ENCODE measurements at regions of chr17 and their contacts with region 1.

Region 1: DNA sequence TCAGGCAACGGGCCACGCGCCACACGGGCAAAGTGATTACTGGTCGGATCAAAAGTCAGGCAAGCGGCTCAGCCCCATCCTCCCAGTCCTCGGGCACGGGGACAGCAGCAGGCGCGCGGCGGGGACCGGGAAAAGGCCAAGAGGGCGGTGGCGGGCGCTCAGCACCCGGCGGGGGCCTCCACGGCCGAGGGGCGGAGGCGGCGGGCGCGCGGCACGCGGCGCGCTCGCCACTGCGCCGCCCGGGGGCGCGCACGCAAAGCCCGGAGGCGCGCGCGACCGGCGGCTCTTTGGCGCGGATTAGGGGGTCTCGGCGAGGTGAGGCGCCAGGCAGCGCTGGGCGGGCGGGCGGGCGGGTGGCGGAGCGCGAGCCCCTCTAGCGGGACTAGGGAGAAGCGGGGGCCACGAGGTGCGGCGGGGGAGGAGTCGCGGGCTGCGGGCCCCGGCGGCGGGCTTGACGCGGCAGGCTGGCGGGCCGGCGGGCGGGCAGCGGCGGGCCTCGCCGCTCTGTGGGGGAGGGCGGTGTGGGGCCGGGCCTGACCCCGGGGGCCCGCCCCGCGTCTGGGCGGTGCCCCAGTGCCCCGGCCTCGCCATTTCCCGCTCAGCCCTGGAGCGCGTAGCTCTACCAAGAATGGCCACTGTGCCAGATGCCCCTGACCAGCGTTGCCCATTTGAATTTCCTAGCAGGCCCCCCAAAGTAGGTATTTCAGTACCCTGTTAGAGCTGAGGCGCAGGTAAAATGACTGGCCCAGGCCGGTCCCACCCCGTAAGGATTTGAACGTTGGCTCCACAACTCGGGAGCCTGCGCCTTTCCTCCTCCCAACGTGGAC is at the starts of genes ACACA and TADA2A:
- DNase-seq: peak; percentile 81 to 90 (median 86)
- ATAC-seq: peak; percentile 93 to 98 (median 97)
- H3K4me3 ChIP-seq: peak within 1 kb of the TSS; percentile 60 to 96 (median 84)
- H3K27ac ChIP-seq: peak within 1 kb of the TSS; percentile 74 to 98 (median 94)
- H3K4me1 ChIP-seq: peaks cover 0 to 29% (median 12%) of the 10 kb centered on the region in 12 donors
- H3K27me3 ChIP-seq: no peaks in the 10 kb centered on the region
- CTCF ChIP-seq: no peak
- POLR2A ChIP-seq: peak in 1 of 2 donors; percentile 61
- total RNA-seq, gene ACACA: 14.0 to 33.0 (median 16.1) TPM
- total RNA-seq, gene TADA2A: 9.6 to 19.4 (median 13.2) TPM

Region 2: DNA sequence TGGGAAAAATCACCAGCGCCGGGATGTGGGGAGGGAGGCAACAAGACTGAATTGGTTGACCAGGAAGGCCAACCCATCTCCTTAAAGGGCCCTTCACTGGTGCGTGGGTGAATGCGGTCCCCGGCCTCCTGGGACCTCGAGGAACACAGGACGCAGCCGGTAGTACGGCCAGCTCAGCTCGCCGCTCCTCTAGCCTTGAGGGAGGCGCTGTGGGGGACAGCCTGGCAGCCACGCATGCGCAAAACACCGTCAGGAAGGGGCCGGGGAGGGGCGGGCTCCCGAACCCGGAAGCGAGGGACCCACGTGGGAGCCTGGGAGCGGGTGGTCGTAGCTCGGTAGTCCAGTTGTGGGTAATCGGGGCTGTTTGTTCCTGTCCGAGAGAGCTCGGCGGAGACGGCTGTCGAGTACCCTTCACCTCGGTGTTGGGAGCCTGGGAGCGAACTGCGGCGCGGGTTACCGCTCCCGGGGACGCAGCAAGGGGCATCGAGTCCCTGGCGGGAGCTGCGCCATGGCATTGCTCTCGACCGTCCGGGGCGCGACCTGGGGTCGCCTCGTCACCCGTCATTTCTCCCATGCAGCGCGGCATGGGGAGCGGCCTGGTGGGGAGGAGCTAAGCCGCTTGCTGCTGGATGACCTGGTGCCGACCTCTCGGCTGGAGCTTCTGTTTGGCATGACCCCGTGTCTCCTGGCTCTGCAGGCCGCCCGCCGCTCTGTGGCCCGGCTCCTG is 805.4 kb before region 1 on chr17 and contains the start of gene MRM1:
- intact Hi-C with region 1: loop called in 1 of 10 experiments (anchors 10 kb)
- DNase-seq: peak; percentile 94 to 97 (median 95)
- ATAC-seq: peak; percentile 93 to 98 (median 94)
- H3K4me3 ChIP-seq: peak within 1 kb of the TSS; percentile 51 to 98 (median 77)
- H3K27ac ChIP-seq: peak within 1 kb of the TSS; percentile 14 to 87 (median 79)
- H3K4me1 ChIP-seq: peaks cover 0 to 30% (median 18%) of the 10 kb centered on the region in 12 donors
- H3K27me3 ChIP-seq: no peaks in the 10 kb centered on the region
- CTCF ChIP-seq: peak in 4 of 12 donors; percentile 5 to 28 (median 22)
- POLR2A ChIP-seq: peak in 1 of 2 donors; percentile 85
- total RNA-seq, gene MRM1: 4.0 to 12.4 (median 7.2) TPM

Region 3: GRCh38 chr17:37373530-37374159 is 33.2 kb before region 1 on chr17:
- intact Hi-C with region 1: loop called in 1 of 10 experiments (anchors 5 kb)
- DNase-seq: peak in 3 of 5 donors; percentile 32 to 49 (median 35)
- ATAC-seq: peak; percentile 67 to 94 (median 86)
- H3K4me3 ChIP-seq: no peak overlapping the region
- H3K27ac ChIP-seq: no peak overlapping the region
- H3K4me1 ChIP-seq: peaks cover 0 to 3% (median 0%) of the 10 kb centered on the region in 12 donors
- H3K27me3 ChIP-seq: no peaks in the 10 kb centered on the region
- CTCF ChIP-seq: peak; percentile 80 to 96 (median 86)
- POLR2A ChIP-seq: no peak

Region 4: DNA sequence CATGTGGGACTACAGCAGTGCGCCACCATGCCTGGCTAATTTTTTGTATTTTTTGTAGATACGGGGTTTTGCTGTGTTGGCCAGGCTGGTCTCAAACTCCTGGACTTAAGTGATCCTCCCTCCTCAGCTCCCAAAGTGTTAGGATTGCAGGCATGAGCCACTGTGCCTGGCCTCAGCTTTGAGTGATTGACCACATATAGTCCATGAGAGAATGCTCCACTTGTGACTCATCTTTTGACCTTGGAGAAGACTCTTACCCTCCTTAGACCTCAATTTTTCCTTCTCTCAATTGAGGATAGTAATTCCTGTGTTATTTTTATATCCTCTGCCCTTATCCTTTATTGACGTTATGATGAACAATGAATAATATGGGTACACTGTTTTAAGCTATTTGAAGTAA is 52.0 kb after region 1 on chr17:
- intact Hi-C with region 1: no loop called
- DNase-seq: no peak
- ATAC-seq: no peak
- H3K4me3 ChIP-seq: no peak overlapping the region
- H3K27ac ChIP-seq: no peak overlapping the region
- H3K4me1 ChIP-seq: no peaks in the 10 kb centered on the region
- H3K27me3 ChIP-seq: no peaks in the 10 kb centered on the region
- CTCF ChIP-seq: no peak
- POLR2A ChIP-seq: no peak

Region 5: DNA sequence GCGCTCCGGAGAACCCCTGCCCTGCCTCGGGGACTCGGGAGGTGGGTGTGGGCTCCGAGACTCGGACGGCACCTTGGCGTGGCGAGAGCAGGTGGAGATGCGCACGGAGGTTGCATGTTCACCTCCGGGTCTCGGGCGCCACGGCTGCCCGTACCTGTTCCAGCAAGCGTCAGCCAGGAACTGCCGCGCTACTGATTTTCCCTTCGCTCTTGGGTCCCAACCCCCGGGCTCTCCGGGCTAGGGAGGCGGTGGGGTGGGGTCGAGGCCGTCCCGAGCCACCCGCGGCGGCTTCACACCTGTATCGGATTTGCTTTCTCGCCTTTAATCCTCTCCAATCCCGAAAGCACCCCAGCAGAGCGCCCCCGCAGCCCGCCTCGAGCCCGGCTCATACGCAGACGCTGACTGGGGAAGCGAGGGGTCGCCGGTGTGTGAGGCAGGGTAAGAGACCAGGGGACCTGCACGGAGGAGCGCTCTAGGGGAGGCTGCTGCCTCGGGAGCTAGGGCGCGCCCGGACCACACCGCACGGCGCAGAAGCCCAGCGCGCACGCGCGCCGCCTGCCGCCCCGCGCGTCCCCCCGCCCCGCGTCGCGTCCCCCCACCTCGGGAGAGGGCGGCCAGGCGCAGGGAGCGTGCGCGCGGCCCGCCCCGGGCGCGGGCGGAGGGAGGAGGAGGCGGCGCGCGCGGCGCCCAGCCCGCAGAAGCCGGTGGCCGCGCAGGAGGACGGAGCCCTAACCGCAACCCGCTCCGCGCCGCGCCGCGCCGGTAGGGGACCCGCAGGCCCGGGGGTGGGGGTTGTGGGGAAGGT is 82.6 kb after region 1 on chr17 and contains the start of gene DUSP14:
- intact Hi-C with region 1: loop called in 1 of 10 experiments (anchors 1 kb)
- DNase-seq: peak; percentile 82 to 90 (median 87)
- ATAC-seq: peak; percentile 60 to 87 (median 82)
- H3K4me3 ChIP-seq: peak within 1 kb of the TSS; percentile 77 to 97 (median 90)
- H3K27ac ChIP-seq: peak within 1 kb of the TSS; percentile 78 to 95 (median 90)
- H3K4me1 ChIP-seq: peaks cover 3 to 47% (median 24%) of the 10 kb centered on the region in 12 donors
- H3K27me3 ChIP-seq: no peaks in the 10 kb centered on the region
- CTCF ChIP-seq: peak in 1 of 12 donors; percentile 14
- POLR2A ChIP-seq: peak in 1 of 2 donors; percentile 69
- total RNA-seq, gene DUSP14: 13.4 to 39.1 (median 16.5) TPM

Measured in heart left ventricle (tissue), 16 donors.